ENCODE measurements at regions of chr13 and their contacts with region 1.

Region 1: DNA sequence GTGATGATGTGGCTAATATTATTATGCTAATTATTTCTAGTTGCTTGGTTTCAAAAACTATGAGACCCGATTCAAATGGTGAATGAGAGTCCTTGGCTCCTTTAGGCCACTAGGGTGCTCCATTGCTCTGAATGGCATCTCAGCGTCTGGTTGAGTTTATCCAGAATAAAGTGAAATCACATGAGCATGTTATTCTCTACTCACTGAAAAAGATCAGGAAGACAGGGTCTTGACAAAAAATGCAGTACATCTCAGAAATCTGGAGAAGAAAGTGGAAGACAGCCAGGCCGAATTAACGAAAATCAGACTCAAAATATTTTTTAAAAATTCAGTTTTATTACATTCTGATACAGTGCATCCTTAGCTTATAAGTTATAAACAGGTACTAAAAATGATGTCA is 516.2 kb downstream of the MYO16 start:
- DNase-seq: no peak
- ATAC-seq: peak; percentile 98
- H3K4me3 ChIP-seq: no peak overlapping the region
- H3K27ac ChIP-seq: no peak overlapping the region
- H3K4me1 ChIP-seq: no peaks in the 10 kb centered on the region
- H3K27me3 ChIP-seq: no peaks in the 10 kb centered on the region; a peak in 1 of 4 replicates
- CTCF ChIP-seq: peak; percentile 76 to 81 (median 78)
- EP300 ChIP-seq: no peak
- POLR2A ChIP-seq: no peak
- RAD21 ChIP-seq: peak; percentile 95

Region 2: GRCh38 chr13:109131698-109132257 is 13.9 kb before region 1 on chr13:
- CTCF ChIA-PET with region 1: interaction called, 8 read pairs
- POLR2A ChIA-PET with region 1: no interaction called
- RAD21 ChIA-PET with region 1: interaction called, 8 read pairs
- SMC1A ChIA-PET with region 1: interaction called, 17 read pairs
- in situ Hi-C with region 1: no loop called
- intact Hi-C with region 1: no loop called
- DNase-seq: peak; percentile 77
- ATAC-seq: peak; percentile 87
- H3K4me3 ChIP-seq: no peak overlapping the region
- H3K27ac ChIP-seq: peak overlapping the region; percentile 42; the same call in 1 of the 2 replicates
- H3K4me1 ChIP-seq: peaks cover 14% of the 10 kb centered on the region
- H3K27me3 ChIP-seq: no peaks in the 10 kb centered on the region
- CTCF ChIP-seq: no peak
- EP300 ChIP-seq: peak; percentile 51 to 70; a peak in 1 of 4 replicates
- POLR2A ChIP-seq: no peak
- RAD21 ChIP-seq: no peak

Region 3: GRCh38 chr13:109157275-109157674 is 11.6 kb after region 1 on chr13:
- CTCF ChIA-PET with region 1: interaction called, 17 read pairs
- POLR2A ChIA-PET with region 1: no interaction called
- RAD21 ChIA-PET with region 1: interaction called, 13 read pairs
- SMC1A ChIA-PET with region 1: interaction called, 55 read pairs
- in situ Hi-C with region 1: no loop called
- intact Hi-C with region 1: no loop called
- DNase-seq: no peak
- ATAC-seq: no peak
- H3K4me3 ChIP-seq: no peak overlapping the region
- H3K27ac ChIP-seq: no peak overlapping the region
- H3K4me1 ChIP-seq: peaks cover 22% of the 10 kb centered on the region
- H3K27me3 ChIP-seq: no peaks in the 10 kb centered on the region
- CTCF ChIP-seq: no peak
- EP300 ChIP-seq: no peak
- POLR2A ChIP-seq: no peak
- RAD21 ChIP-seq: no peak

Region 4: DNA sequence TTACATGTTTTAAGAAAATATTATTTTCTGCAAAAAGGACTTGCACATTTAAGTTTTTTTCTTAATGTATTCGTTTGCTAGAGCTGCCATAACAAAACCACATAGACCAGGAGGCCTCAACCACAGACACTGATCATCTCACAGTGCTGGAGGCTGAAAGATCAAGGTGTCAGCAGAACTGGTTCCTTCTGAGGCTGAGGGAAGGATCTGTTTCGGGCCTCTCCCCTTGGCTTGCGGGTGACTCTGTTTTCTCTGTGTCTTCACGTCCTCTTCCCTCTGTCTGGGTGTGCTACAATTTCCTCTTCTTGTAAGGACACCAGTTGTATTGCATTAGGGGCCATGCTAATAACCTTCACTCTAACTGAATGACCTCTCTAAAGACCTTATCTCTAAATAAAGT is 276.5 kb after region 1 on chr13:
- CTCF ChIA-PET with region 1: interaction called, 3 read pairs
- POLR2A ChIA-PET with region 1: no interaction called
- RAD21 ChIA-PET with region 1: no interaction called
- SMC1A ChIA-PET with region 1: no interaction called
- in situ Hi-C with region 1: no loop called
- intact Hi-C with region 1: loop called (anchors 10 kb)
- DNase-seq: no peak
- ATAC-seq: no peak
- H3K4me3 ChIP-seq: no peak overlapping the region
- H3K27ac ChIP-seq: no peak overlapping the region
- H3K4me1 ChIP-seq: no peaks in the 10 kb centered on the region
- H3K27me3 ChIP-seq: no peaks in the 10 kb centered on the region
- CTCF ChIP-seq: no peak
- EP300 ChIP-seq: no peak
- POLR2A ChIP-seq: no peak
- RAD21 ChIP-seq: no peak

Region 5: DNA sequence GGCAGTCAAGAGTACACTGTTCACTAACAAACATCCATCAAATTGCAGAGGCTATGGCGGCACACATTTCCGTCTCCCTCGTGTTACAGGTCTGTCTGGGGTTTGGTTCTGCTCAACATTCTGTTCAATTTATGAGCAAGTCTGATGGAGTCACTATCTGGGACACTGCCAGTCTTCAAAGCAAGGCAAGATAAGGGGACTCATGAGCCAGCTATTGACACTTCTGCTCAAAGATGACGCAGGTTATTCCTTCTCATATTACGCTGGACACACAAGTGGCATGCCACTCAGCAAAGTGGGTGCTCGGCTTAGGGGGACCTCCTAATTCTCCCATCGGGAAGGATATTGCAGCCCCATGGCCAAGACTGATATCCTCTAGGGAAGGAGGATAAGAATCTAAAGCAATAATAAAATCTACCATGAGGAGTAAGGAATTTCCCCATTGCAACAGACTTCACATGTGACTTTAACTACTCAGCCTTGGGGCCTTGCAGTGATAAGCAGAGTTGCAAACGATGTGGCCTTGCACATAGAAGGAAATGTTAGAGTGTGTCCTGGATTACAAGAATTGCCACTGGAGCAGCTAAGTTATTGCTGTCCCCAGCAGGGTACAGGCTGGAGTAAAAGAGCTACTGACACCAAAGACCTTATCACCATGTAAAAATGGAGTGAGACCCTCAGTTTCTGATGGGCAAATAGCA is 334.5 kb after region 1 on chr13:
- CTCF ChIA-PET with region 1: interaction called, 3 read pairs
- POLR2A ChIA-PET with region 1: no interaction called
- RAD21 ChIA-PET with region 1: no interaction called
- SMC1A ChIA-PET with region 1: no interaction called
- in situ Hi-C with region 1: no loop called
- intact Hi-C with region 1: loop called (anchors 10 kb)
- DNase-seq: no peak
- ATAC-seq: no peak
- H3K4me3 ChIP-seq: no peak overlapping the region
- H3K27ac ChIP-seq: no peak overlapping the region
- H3K4me1 ChIP-seq: no peaks in the 10 kb centered on the region
- H3K27me3 ChIP-seq: no peaks in the 10 kb centered on the region
- CTCF ChIP-seq: no peak
- EP300 ChIP-seq: no peak
- POLR2A ChIP-seq: no peak
- RAD21 ChIP-seq: no peak

Region 6: DNA sequence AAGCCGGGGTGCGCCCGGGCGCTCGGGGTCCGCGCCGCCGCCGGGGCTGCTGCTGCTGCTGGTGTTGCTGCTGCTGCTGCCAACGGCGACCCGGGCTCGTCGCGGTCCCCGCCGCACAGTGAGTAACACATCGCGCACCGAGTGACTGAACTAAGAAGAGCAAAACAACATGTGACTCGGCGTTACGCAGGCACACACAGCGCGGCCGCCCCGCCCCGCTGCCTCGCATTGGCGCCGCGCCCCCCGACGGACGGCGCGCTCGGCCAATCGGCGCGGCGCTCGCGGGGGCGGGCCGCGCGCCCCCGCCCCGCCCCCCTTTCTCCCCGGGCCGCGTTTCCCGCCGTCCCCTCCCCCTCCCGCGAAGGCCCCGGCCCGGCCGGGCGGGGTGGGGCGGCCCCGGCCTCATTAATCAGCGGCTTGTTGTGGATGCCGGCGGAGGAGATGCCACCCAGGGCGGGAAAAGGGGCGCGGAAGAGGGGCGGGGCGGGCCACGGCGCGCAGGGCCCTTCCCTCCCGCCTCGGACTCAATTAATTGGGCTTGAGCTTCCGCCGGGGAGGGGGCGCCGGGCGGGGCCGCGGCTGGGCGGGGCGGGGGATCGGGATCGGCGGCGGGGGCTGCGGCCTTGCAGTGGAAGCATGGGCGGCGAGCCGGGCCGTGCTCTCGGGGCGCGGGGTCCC is 641.0 kb after region 1 on chr13 and contains the start of gene IRS2:
- CTCF ChIA-PET with region 1: interaction called, 3 read pairs
- POLR2A ChIA-PET with region 1: interaction called, 3 read pairs
- RAD21 ChIA-PET with region 1: interaction called, 3 read pairs
- SMC1A ChIA-PET with region 1: interaction called, 6 read pairs
- in situ Hi-C with region 1: no loop called
- intact Hi-C with region 1: loop called (anchors 2 kb)
- DNase-seq: no peak
- ATAC-seq: peak; percentile 92
- H3K4me3 ChIP-seq: peak within 1 kb of the TSS; percentile 32; the same call in 1 of the 2 replicates
- H3K27ac ChIP-seq: no peak within 1 kb of the TSS
- H3K4me1 ChIP-seq: no peaks in the 10 kb centered on the region
- H3K27me3 ChIP-seq: peaks cover 1 to 3% of the 10 kb centered on the region in 2 experiments; a peak in 3 of 4 replicates
- CTCF ChIP-seq: no peak
- EP300 ChIP-seq: no peak
- POLR2A ChIP-seq: peak; percentile 80
- RAD21 ChIP-seq: no peak
- polyA plus RNA-seq, gene IRS2: 0.03 TPM in 1 of 2 experiments, not detected in the other

Region 7: GRCh38 chr13:110116072-110116487 is 970.4 kb after region 1 on chr13:
- CTCF ChIA-PET with region 1: interaction called, 8 read pairs
- POLR2A ChIA-PET with region 1: no interaction called
- RAD21 ChIA-PET with region 1: interaction called, 4 read pairs
- SMC1A ChIA-PET with region 1: interaction called, 6 read pairs
- in situ Hi-C with region 1: no loop called
- intact Hi-C with region 1: loop called (anchors 1 kb)
- DNase-seq: no peak
- ATAC-seq: peak; percentile 85
- H3K4me3 ChIP-seq: no peak overlapping the region
- H3K27ac ChIP-seq: no peak overlapping the region
- H3K4me1 ChIP-seq: no peaks in the 10 kb centered on the region; the same call in 1 of the 2 replicates
- H3K27me3 ChIP-seq: peaks cover 0 to 2% of the 10 kb centered on the region in 2 experiments; a peak in 1 of 4 replicates
- CTCF ChIP-seq: peak; percentile 71 to 98 (median 88)
- EP300 ChIP-seq: no peak
- POLR2A ChIP-seq: no peak
- RAD21 ChIP-seq: peak; percentile 65

Measured in GM12878 (cell line).